Natural killer cell (primary cell): ENCODE measurements at regions of chr20 and their contacts with region 1.

Region 1: GRCh38 chr20:1466211-1467081 is at the start of gene NSFL1C:
- DNase-seq: peak; percentile 98 to 99
- ATAC-seq: peak; percentile 96 to 99 (median 97)
- H3K4me3 ChIP-seq: peak within 1 kb of the TSS; percentile 58
- H3K4me3 Mint-ChIP-seq: peak within 1 kb of the TSS; percentile 90
- H3K27ac ChIP-seq: peak within 1 kb of the TSS; percentile 61
- H3K27ac Mint-ChIP-seq: peak within 1 kb of the TSS; percentile 61 to 73
- H3K4me1 ChIP-seq: peaks cover 28% of the 10 kb centered on the region
- H3K4me1 Mint-ChIP-seq: peaks cover 42 to 51% of the 10 kb centered on the region in 2 donors
- H3K27me3 ChIP-seq: no peaks in the 10 kb centered on the region
- H3K27me3 Mint-ChIP-seq: peaks cover 16 to 24% of the 10 kb centered on the region in 2 donors
- CTCF ChIP-seq: peak; percentile 100
- total RNA-seq, gene NSFL1C: 53.9 to 69.0 (median 66.2) TPM

Region 2: GRCh38 chr20:1087311-1087905 is 379.0 kb before region 1 on chr20:
- intact Hi-C with region 1: no loop called
- DNase-seq: no peak
- ATAC-seq: no peak
- H3K4me3 ChIP-seq: no peak overlapping the region
- H3K4me3 Mint-ChIP-seq: no peak overlapping the region
- H3K27ac ChIP-seq: no peak overlapping the region
- H3K27ac Mint-ChIP-seq: no peak overlapping the region
- H3K4me1 ChIP-seq: no peaks in the 10 kb centered on the region
- H3K4me1 Mint-ChIP-seq: peaks cover 0 to 9% of the 10 kb centered on the region in 2 donors
- H3K27me3 ChIP-seq: no peaks in the 10 kb centered on the region
- H3K27me3 Mint-ChIP-seq: no peaks in the 10 kb centered on the region
- CTCF ChIP-seq: no peak

Region 3: GRCh38 chr20:1118336-1119127 is 347.9 kb before region 1 on chr20 and contains the start of gene PSMF1:
- intact Hi-C with region 1: loop called (anchors 1 kb)
- DNase-seq: peak; percentile 95 to 97
- ATAC-seq: peak; percentile 96 to 99 (median 97)
- H3K4me3 ChIP-seq: peak within 1 kb of the TSS; percentile 86
- H3K4me3 Mint-ChIP-seq: peak within 1 kb of the TSS; percentile 94
- H3K27ac ChIP-seq: peak within 1 kb of the TSS; percentile 74
- H3K27ac Mint-ChIP-seq: peak within 1 kb of the TSS; percentile 79 to 88
- H3K4me1 ChIP-seq: peaks cover 35% of the 10 kb centered on the region
- H3K4me1 Mint-ChIP-seq: peaks cover 54 to 56% of the 10 kb centered on the region in 2 donors
- H3K27me3 ChIP-seq: no peaks in the 10 kb centered on the region
- H3K27me3 Mint-ChIP-seq: no peaks in the 10 kb centered on the region
- CTCF ChIP-seq: peak; percentile 11
- total RNA-seq, gene PSMF1: 97.1 to 107 (median 101) TPM

Region 4: DNA sequence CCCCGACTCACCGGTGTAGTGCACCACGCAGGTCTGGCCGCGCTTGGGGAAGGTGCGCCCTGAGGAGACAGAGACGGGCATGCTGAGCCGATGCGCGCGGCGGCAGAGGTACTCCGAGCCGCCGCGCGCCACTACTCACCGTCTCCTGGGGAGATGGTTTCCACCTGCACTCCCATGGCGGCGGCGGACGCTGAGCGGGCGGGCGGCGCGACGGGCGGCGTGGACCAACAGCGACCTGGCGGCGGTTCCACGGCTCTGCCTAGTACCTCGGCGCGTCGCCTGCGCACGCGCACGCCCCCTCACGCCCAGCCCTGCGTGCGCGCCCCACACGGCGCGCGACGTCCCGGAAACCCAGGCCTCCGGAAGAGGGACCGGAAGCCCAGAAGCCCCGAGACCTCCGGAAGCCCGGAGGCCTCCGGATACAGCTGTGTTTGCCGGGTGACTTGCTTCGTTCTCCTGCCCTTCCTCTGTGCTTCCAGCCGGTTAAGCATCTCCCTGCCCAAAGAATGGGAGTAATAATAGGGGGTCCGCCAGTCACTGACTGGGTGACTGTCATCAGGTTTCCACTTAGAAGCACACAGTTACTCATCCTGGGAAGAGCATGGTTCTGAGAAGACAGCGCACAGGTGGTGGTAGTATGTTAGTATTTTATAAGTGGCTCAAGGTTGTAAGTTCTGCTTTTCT is 73.5 kb before region 1 on chr20 and contains the start of gene FKBP1A:
- intact Hi-C with region 1: loop called (anchors 1 kb)
- DNase-seq: peak; percentile 82 to 97
- ATAC-seq: peak; percentile 95 to 98 (median 95)
- H3K4me3 ChIP-seq: peak within 1 kb of the TSS; percentile 49
- H3K4me3 Mint-ChIP-seq: peak within 1 kb of the TSS; percentile 88
- H3K27ac ChIP-seq: peak within 1 kb of the TSS; percentile 67
- H3K27ac Mint-ChIP-seq: peak within 1 kb of the TSS; percentile 89 to 90
- H3K4me1 ChIP-seq: peaks cover 48% of the 10 kb centered on the region
- H3K4me1 Mint-ChIP-seq: peaks cover 32 to 50% of the 10 kb centered on the region in 2 donors
- H3K27me3 ChIP-seq: no peaks in the 10 kb centered on the region
- H3K27me3 Mint-ChIP-seq: peaks cover 13 to 29% of the 10 kb centered on the region in 2 donors
- CTCF ChIP-seq: peak; percentile 17
- total RNA-seq, gene FKBP1A: 74.6 to 76.4 (median 75.4) TPM

Region 5: GRCh38 chr20:1437235-1437904 is 29.1 kb before region 1 on chr20:
- intact Hi-C with region 1: loop called (anchors 2 kb)
- DNase-seq: peak; percentile 66 to 91
- ATAC-seq: peak; percentile 70 to 73 (median 70)
- H3K4me3 ChIP-seq: no peak overlapping the region
- H3K4me3 Mint-ChIP-seq: no peak overlapping the region
- H3K27ac ChIP-seq: no peak overlapping the region
- H3K27ac Mint-ChIP-seq: no peak overlapping the region
- H3K4me1 ChIP-seq: peaks cover 15% of the 10 kb centered on the region
- H3K4me1 Mint-ChIP-seq: peaks cover 13 to 25% of the 10 kb centered on the region in 2 donors
- H3K27me3 ChIP-seq: peaks cover 12% of the 10 kb centered on the region
- H3K27me3 Mint-ChIP-seq: peaks cover 12 to 26% of the 10 kb centered on the region in 2 donors
- CTCF ChIP-seq: peak; percentile 83